Activated T-helper 1 cell treated with anti-CD3 and anti-CD28 coated beads, Interleukin-12 subunit alpha, Interleukin-12 subunit beta, Interleukin-2, Interleukin-4 antibody, amounts not matched to agents 30 ng/mL and 10 ng/mL and 1 ng/mL, durations not matched to agents 14 hours and 24 hours and 36 hours (primary cell): ENCODE measurements at regions of chr5 and their contacts with region 1.

Region 1: DNA sequence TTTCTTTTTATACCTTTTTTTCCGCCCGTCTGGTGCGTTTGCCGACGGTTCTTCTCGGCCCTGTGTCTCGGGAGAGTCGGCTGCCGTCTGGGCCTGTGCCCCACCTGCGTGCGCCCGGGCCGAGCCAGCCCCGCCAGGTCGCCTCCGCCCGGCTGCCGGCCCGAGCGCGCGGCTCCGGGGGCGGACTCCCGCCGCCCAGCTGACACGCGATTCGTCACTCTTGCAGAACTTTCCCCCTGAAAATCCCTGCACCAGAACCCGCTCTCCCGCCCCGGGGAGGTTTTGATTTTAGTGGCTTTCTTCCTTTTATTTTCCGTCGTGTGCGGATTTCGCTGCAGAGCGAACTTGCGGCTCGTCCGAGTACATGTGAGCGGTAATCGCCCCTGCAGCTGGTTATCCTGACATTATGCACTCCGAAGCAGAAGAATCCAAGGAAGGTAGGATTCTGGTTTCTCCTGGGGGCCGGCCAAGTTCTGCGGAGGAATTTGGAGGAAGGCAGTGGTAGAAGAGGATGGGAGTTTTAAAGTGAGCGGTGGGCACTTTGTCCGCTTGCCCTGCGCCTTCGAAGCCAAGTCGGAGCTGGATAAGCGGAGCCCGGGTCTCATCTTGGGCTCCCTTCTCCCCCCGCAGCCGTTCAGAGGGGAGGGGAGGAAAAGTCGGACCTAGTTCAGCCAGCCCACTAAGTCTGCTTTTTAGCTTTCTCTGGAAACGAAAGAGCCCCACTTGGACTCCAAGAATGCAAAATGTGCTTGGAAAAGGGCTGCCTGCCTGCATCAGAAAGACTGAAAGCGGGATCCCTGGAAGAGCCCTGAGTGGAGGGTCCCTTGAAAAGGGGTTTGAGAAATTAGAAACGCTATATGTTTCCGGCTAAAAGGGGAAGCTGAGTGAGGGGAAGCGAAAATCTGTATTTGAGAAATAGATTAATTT is at the start of gene TNFAIP8:
- DNase-seq: peak; percentile 64
- H3K4me3 Mint-ChIP-seq: peak within 1 kb of the TSS; percentile 95
- H3K27ac Mint-ChIP-seq: peak within 1 kb of the TSS; percentile 91
- H3K4me1 Mint-ChIP-seq: peaks cover 74% of the 10 kb centered on the region
- H3K27me3 Mint-ChIP-seq: no peaks in the 10 kb centered on the region
- total RNA-seq, gene TNFAIP8: 214 and 219 TPM in 2 replicates

Region 2: GRCh38 chr5:119079318-119079921 is 276.5 kb before region 1 on chr5:
- intact Hi-C with region 1: loop called (anchors 1 kb)
- DNase-seq: peak; percentile 25
- H3K4me3 Mint-ChIP-seq: peak overlapping the region; percentile 23
- H3K27ac Mint-ChIP-seq: peak overlapping the region; percentile 70
- H3K4me1 Mint-ChIP-seq: peaks cover 50% of the 10 kb centered on the region
- H3K27me3 Mint-ChIP-seq: no peaks in the 10 kb centered on the region

Region 3: GRCh38 chr5:119274767-119275130 is 81.2 kb before region 1 on chr5:
- intact Hi-C with region 1: loop called (anchors 1 kb)
- DNase-seq: no peak
- H3K4me3 Mint-ChIP-seq: peak overlapping the region; percentile 99
- H3K27ac Mint-ChIP-seq: peak overlapping the region; percentile 95
- H3K4me1 Mint-ChIP-seq: peaks cover 98% of the 10 kb centered on the region
- H3K27me3 Mint-ChIP-seq: no peaks in the 10 kb centered on the region

Region 4: DNA sequence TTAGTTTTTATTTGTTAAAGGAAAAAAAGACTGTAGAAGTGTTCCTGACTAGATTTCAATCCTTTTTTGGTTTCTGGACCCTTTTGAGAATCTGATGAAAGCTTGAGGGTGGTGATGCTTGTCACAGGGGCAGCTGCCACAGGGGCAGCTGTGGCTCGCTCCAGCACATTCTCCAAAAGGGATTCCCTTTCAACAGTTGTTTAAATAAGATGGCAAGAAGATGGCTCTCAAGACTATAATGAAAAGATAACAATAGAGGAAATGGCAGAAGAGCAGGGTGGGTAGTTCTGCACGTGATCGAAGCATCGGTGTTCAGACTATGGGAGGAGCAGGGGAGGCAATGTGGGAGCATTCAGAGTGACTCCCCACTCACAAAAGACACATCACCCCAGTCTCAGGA is 46.6 kb before region 1 on chr5:
- intact Hi-C with region 1: loop called (anchors 1 kb)
- DNase-seq: no peak
- H3K4me3 Mint-ChIP-seq: peak overlapping the region; percentile 82
- H3K27ac Mint-ChIP-seq: peak overlapping the region; percentile 96
- H3K4me1 Mint-ChIP-seq: peaks cover 92% of the 10 kb centered on the region
- H3K27me3 Mint-ChIP-seq: no peaks in the 10 kb centered on the region

Region 5: GRCh38 chr5:119315516-119315949 is 40.4 kb before region 1 on chr5:
- intact Hi-C with region 1: loop called (anchors 1 kb)
- DNase-seq: no peak
- H3K4me3 Mint-ChIP-seq: peak overlapping the region; percentile 27
- H3K27ac Mint-ChIP-seq: peak overlapping the region; percentile 84
- H3K4me1 Mint-ChIP-seq: peaks cover 93% of the 10 kb centered on the region
- H3K27me3 Mint-ChIP-seq: no peaks in the 10 kb centered on the region

Region 6: DNA sequence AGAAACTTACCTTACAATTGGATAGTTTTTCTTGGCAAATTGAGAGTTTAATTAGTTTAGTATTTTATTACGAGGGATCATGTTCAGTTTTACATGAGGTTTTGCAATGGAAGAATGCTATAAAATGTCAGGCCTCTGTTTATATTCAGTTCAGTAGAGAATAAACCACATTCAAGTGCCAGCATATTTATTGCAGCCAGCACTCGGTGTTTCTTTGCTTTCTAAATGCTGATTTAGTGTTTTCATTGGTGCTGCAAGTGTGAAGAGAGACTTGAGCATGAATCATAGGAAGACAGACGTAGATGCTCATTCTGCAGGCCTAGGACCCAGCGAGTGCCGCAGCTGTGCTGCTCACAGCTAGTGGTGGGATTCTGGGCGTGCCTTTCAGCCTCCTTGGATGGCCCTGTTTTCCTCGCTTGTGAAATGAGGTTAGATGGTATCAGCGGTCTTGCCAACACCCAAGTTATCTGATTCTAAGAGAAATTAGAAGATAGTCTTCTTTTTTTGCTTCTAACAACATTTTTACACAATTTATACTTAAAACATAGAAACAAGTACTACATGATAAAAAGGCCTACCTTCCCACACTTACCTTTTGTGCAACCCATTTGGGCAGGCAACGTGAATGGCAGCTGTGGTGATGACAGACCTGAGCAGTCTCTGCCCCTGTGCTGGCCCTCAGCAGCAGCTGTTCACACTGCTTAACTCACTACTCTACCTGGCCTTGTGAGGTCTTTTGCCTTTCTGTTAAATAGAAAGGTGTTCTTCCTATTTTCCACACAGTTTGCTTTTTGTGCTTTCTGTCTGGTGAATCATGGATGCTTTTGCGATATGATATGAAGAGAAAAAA is 27.0 kb before region 1 on chr5:
- intact Hi-C with region 1: loop called (anchors 1 kb)
- DNase-seq: peak; percentile 52
- H3K4me3 Mint-ChIP-seq: peak overlapping the region; percentile 52
- H3K27ac Mint-ChIP-seq: peak overlapping the region; percentile 95
- H3K4me1 Mint-ChIP-seq: peaks cover 91% of the 10 kb centered on the region
- H3K27me3 Mint-ChIP-seq: no peaks in the 10 kb centered on the region

Region 7: GRCh38 chr5:119340597-119341218 is 15.2 kb before region 1 on chr5:
- intact Hi-C with region 1: loop called (anchors 1 kb)
- DNase-seq: peak; percentile 63
- H3K4me3 Mint-ChIP-seq: peak overlapping the region; percentile 83
- H3K27ac Mint-ChIP-seq: peak overlapping the region; percentile 100
- H3K4me1 Mint-ChIP-seq: peaks cover 95% of the 10 kb centered on the region
- H3K27me3 Mint-ChIP-seq: no peaks in the 10 kb centered on the region

Region 8: GRCh38 chr5:119389288-119390030 is 33.5 kb after region 1 on chr5:
- intact Hi-C with region 1: no loop called
- DNase-seq: no peak
- H3K4me3 Mint-ChIP-seq: peak overlapping the region; percentile 25
- H3K27ac Mint-ChIP-seq: peak overlapping the region; percentile 73
- H3K4me1 Mint-ChIP-seq: peaks cover 90% of the 10 kb centered on the region
- H3K27me3 Mint-ChIP-seq: no peaks in the 10 kb centered on the region